Esophagus squamous epithelium (tissue), 5 donors: ENCODE measurements at regions of chr11 and their contacts with region 1.

Region 1: DNA sequence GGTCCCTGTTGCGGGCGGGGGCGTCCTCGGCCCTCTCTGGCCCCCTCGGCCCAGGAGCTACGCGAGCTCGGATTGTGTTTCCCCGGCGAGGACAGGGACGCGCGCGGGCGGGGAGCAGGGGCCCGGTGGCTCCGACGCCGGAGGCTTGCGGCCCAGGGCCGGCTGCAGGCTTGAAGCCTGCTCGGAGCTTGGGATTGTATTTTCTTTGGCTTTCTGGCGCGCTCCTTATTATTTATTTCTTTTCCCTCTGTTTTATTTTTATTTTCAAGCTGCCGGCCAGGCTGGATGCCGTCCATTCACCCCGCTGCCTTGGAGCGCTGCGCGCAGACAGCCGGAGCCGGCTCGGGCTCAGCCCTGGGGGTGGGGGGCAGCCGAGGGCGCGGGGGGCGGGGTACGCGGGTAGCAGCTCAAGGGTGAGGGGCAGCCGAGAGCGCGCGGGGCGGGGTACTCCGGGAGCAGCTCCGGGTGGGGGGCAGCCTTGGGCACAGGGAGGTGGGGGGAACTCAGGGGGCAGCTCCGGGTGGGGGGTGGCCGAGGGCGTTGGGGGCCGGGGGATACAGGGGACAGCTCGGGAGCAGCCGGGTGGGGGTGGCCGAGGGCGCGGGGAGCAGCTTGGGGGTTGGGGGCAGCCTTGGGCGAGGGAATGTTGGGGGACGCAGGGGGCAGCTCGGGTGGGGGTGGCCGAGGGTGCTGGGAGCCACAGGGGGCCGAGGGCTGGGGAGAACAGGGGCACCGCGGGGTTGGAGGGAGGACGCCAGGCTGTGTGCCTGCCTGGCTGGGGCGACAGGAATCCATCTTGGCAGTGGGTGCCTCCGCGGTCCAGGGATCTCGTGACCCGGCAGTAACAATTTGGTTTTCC is 42.7 kb downstream of the KCNJ1 start:
- DNase-seq: no peak
- H3K4me3 ChIP-seq: peak overlapping the region in 2 of 4 donors; percentile 13 to 44
- H3K27ac ChIP-seq: no peak overlapping the region
- H3K4me1 ChIP-seq: peaks cover 0 to 9% (median 3%) of the 10 kb centered on the region in 3 donors
- H3K27me3 ChIP-seq: peaks cover 0 to 27% (median 0%) of the 10 kb centered on the region in 4 donors
- CTCF ChIP-seq: no peak
- POLR2A ChIP-seq: no peak

Region 2: GRCh38 chr11:128653801-128654231 is 170.6 kb before region 1 on chr11:
- intact Hi-C with region 1: loop called (anchors 10 kb)
- DNase-seq: no peak
- H3K4me3 ChIP-seq: peak overlapping the region in 1 of 4 donors; percentile 15
- H3K27ac ChIP-seq: no peak overlapping the region
- H3K4me1 ChIP-seq: peaks cover 0 to 6% (median 0%) of the 10 kb centered on the region in 3 donors
- H3K27me3 ChIP-seq: no peaks in the 10 kb centered on the region
- CTCF ChIP-seq: no peak
- POLR2A ChIP-seq: no peak

Region 3: DNA sequence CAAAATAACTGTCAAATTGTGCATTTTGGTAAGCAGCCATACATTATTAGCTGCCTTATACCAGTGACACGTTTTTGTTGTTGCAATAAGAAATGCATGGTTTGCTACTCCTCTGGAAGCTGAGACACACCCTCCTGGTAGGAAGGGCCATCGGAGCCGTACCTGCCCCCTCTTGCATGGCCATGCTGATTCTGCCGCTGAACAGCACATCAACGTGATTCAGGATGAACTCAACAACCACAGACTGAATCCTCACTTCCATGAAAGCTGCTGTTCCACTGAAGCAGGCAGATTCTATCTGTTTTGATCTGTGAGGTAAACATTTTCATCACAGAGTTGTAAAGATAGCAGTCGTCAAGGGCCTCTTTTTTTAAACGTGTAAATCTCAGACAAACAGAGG is 156.8 kb after region 1 on chr11:
- intact Hi-C with region 1: no loop called
- DNase-seq: no peak
- H3K4me3 ChIP-seq: no peak overlapping the region
- H3K27ac ChIP-seq: no peak overlapping the region
- H3K4me1 ChIP-seq: no peaks in the 10 kb centered on the region
- H3K27me3 ChIP-seq: no peaks in the 10 kb centered on the region
- CTCF ChIP-seq: no peak
- POLR2A ChIP-seq: no peak